Heart right ventricle (tissue), 16 donors: ENCODE measurements at regions of chr22 and their contacts with region 1.

Region 1: GRCh38 chr22:37316875-37317371 is 34.6 kb downstream of the CYTH4 start:
- DNase-seq: peak; percentile 62 to 78
- ATAC-seq: peak; percentile 71 to 89 (median 83)
- H3K4me3 ChIP-seq: no peak overlapping the region
- H3K27ac ChIP-seq: no peak overlapping the region
- H3K4me1 ChIP-seq: peaks cover 0 to 29% (median 4%) of the 10 kb centered on the region in 9 donors
- H3K27me3 ChIP-seq: peaks cover 0 to 47% (median 24%) of the 10 kb centered on the region in 7 donors
- CTCF ChIP-seq: peak; percentile 61 to 89 (median 82)

Region 2: GRCh38 chr22:36409911-36410756 is 906.8 kb before region 1 on chr22:
- intact Hi-C with region 1: loop called in 1 of 10 experiments (anchors 10 kb)
- DNase-seq: peak; percentile 73 to 78
- ATAC-seq: peak; percentile 84 to 95 (median 88)
- H3K4me3 ChIP-seq: peak overlapping the region in 9 of 10 donors; percentile 8 to 45 (median 36)
- H3K27ac ChIP-seq: peak overlapping the region in 9 of 10 donors; percentile 40 to 83 (median 75)
- H3K4me1 ChIP-seq: peaks cover 0 to 51% (median 12%) of the 10 kb centered on the region in 9 donors
- H3K27me3 ChIP-seq: no peaks in the 10 kb centered on the region
- CTCF ChIP-seq: no peak

Region 3: GRCh38 chr22:37259540-37260029 is 57.3 kb before region 1 on chr22:
- intact Hi-C with region 1: no loop called
- DNase-seq: no peak
- ATAC-seq: peak in 4 of 8 donors; percentile 29 to 50 (median 43)
- H3K4me3 ChIP-seq: no peak overlapping the region
- H3K27ac ChIP-seq: no peak overlapping the region
- H3K4me1 ChIP-seq: peaks cover 0 to 24% (median 0%) of the 10 kb centered on the region in 9 donors
- H3K27me3 ChIP-seq: peaks cover 0 to 87% (median 76%) of the 10 kb centered on the region in 7 donors
- CTCF ChIP-seq: peak in 6 of 9 donors; percentile 24 to 50 (median 43)

Region 4: DNA sequence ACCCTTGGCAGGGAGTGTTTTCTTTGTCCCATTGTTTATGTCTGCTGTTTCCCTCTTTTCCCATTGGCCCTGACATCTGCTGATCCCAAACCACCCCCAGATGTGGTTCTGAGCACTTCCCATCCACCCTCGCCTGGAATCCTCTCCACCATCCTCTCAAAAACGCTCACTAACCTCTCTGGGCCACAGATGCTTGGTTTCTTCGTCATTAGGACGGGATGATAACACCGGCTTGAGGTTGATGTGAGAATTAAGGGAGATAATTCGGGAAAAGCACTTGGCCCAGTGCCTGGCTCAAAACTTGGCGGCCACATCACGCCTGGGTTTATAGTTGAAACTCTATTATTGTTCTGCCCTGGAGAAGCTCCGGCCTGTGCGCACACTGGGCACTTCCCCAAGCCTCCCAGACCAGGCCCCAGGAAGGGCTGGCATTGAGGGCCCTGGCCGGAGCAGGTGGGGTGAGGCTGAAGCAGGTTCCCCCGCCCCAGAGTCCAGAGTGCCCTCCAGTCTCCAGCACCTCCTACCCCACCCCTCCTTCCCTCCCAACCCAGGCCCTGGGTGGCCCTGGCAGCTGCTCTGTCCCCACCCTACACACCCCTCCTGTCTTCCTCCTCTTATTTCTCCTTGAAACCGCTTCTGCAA is 29.1 kb after region 1 on chr22:
- intact Hi-C with region 1: no loop called
- DNase-seq: peak in 1 of 2 donors; percentile 31
- ATAC-seq: peak; percentile 21 to 64 (median 43)
- H3K4me3 ChIP-seq: no peak overlapping the region
- H3K27ac ChIP-seq: peak overlapping the region in 1 of 10 donors; percentile 22
- H3K4me1 ChIP-seq: peaks cover 0 to 13% (median 7%) of the 10 kb centered on the region in 9 donors
- H3K27me3 ChIP-seq: peaks cover 0 to 38% (median 27%) of the 10 kb centered on the region in 7 donors
- CTCF ChIP-seq: no peak

Region 5: DNA sequence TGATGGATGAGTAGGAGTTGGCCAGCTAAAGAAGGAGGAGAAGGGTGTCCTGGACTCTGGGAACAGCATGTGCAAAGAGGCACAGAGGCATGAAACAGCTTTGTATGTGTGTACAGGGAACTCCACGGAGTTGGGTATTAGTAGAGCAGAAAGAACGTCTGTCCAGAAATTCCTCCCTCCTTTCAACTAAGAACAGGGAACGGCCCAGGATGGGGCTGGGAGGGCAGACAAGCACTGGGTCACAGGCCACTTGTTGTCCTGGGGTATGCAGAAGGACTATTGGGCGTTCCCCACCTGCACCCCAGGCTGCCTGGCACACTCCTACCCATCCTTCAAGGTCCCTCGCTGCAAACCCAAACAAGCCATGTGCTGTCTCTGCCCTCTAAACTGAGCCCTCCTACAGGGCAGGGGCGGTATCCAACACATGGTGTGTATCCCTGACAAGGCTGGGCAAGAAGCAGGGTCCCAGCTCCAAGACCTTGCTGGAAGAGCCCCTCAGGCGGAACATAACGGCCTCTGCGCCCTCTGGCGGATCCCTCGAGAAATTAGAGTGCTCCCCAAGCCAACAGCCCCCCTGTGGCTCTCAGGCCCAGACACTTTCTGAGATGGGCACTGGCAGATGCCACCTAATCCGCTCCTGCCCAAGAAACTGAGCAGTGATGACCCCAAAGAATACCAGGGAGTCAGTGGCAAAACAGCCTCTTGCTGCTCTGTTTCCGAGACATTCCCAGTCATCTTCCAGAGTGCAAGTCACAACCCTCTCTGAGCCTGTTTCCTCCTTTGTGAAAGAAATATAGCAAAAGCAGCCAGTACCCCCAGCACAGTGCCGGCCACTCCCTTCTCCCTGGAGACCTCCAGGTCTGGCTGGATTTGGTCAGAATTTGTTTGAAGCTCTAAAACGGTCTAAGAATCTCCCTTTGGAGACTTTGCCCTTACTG is 112.0 kb after region 1 on chr22:
- intact Hi-C with region 1: loop called in 7 of 10 experiments (anchors 2 to 10 kb)
- DNase-seq: peak in 1 of 2 donors; percentile 45
- ATAC-seq: peak in 2 of 8 donors; percentile 10 to 40
- H3K4me3 ChIP-seq: no peak overlapping the region
- H3K27ac ChIP-seq: no peak overlapping the region
- H3K4me1 ChIP-seq: peaks cover 0 to 12% (median 5%) of the 10 kb centered on the region in 9 donors
- H3K27me3 ChIP-seq: peaks cover 34 to 100% (median 98%) of the 10 kb centered on the region in 7 donors
- CTCF ChIP-seq: peak; percentile 27 to 71 (median 59)

Region 6: GRCh38 chr22:37457093-37457893 is 140.4 kb after region 1 on chr22:
- intact Hi-C with region 1: loop called (anchors 1 to 5 kb)
- DNase-seq: peak; percentile 61
- ATAC-seq: peak; percentile 58 to 88 (median 81)
- H3K4me3 ChIP-seq: no peak overlapping the region
- H3K27ac ChIP-seq: no peak overlapping the region
- H3K4me1 ChIP-seq: peaks cover 0 to 5% (median 0%) of the 10 kb centered on the region in 9 donors
- H3K27me3 ChIP-seq: peaks cover 5 to 77% (median 27%) of the 10 kb centered on the region in 7 donors
- CTCF ChIP-seq: peak; percentile 62 to 93 (median 83)

Region 7: GRCh38 chr22:37462983-37463382 is 146.1 kb after region 1 on chr22:
- intact Hi-C with region 1: loop called in 4 of 10 experiments (anchors 2 to 5 kb)
- DNase-seq: no peak
- ATAC-seq: peak in 6 of 8 donors; percentile 25 to 60 (median 46)
- H3K4me3 ChIP-seq: no peak overlapping the region
- H3K27ac ChIP-seq: no peak overlapping the region
- H3K4me1 ChIP-seq: peaks cover 0 to 7% (median 0%) of the 10 kb centered on the region in 9 donors
- H3K27me3 ChIP-seq: peaks cover under 1 to 48% (median 17%) of the 10 kb centered on the region in 7 donors
- CTCF ChIP-seq: no peak

Region 8: GRCh38 chr22:37566903-37567820 is 250.2 kb after region 1 on chr22:
- intact Hi-C with region 1: loop called in 3 of 10 experiments (anchors 10 kb)
- DNase-seq: peak; percentile 79 to 84
- ATAC-seq: peak; percentile 36 to 81 (median 60)
- H3K4me3 ChIP-seq: no peak overlapping the region
- H3K27ac ChIP-seq: peak overlapping the region in 9 of 10 donors; percentile 17 to 100 (median 96)
- H3K4me1 ChIP-seq: peaks cover 23 to 85% (median 62%) of the 10 kb centered on the region in 9 donors
- H3K27me3 ChIP-seq: peaks cover 0 to 11% (median 0%) of the 10 kb centered on the region in 7 donors
- CTCF ChIP-seq: peak; percentile 87 to 96 (median 94)

Region 9: DNA sequence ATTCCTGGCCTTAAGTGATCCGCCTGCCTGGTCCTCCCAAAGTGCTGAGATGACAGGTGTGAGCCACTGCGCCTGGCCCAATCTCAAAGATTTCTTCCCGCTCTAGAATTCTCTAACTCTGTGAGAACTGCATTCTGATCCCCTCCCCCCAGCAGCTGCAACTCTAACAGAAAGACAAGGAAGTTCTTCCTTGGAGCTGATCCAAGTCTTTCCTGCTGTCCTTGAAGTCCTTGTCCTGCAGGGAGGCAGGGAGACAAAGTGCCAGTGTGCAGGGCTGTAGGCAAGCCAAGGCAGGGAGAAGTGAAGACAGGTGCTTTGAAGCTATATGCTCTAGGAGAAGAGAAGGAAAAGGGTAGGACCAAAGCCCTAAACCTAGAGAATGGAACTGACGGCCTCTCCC is 282.2 kb after region 1 on chr22:
- intact Hi-C with region 1: loop called in 5 of 10 experiments (anchors 5 to 10 kb)
- DNase-seq: peak in 1 of 2 donors; percentile 29
- ATAC-seq: peak in 5 of 8 donors; percentile 16 to 33 (median 27)
- H3K4me3 ChIP-seq: no peak overlapping the region
- H3K27ac ChIP-seq: no peak overlapping the region
- H3K4me1 ChIP-seq: peaks cover 0 to 8% (median 0%) of the 10 kb centered on the region in 9 donors
- H3K27me3 ChIP-seq: peaks cover 0 to 9% (median 0%) of the 10 kb centered on the region in 7 donors
- CTCF ChIP-seq: no peak